ENCODE measurements at regions of chr3 and their contacts with region 1.

Region 1: GRCh38 chr3:50347194-50347918 is 1.8 kb upstream of the ZMYND10 start:
- DNase-seq: no peak
- ATAC-seq: no peak
- H3K4me3 ChIP-seq: no peak overlapping the region
- H3K27ac ChIP-seq: no peak overlapping the region
- H3K4me1 ChIP-seq: peaks cover 8% of the 10 kb centered on the region
- H3K27me3 ChIP-seq: no peaks in the 10 kb centered on the region
- CTCF ChIP-seq: peak; percentile 80

Region 2: DNA sequence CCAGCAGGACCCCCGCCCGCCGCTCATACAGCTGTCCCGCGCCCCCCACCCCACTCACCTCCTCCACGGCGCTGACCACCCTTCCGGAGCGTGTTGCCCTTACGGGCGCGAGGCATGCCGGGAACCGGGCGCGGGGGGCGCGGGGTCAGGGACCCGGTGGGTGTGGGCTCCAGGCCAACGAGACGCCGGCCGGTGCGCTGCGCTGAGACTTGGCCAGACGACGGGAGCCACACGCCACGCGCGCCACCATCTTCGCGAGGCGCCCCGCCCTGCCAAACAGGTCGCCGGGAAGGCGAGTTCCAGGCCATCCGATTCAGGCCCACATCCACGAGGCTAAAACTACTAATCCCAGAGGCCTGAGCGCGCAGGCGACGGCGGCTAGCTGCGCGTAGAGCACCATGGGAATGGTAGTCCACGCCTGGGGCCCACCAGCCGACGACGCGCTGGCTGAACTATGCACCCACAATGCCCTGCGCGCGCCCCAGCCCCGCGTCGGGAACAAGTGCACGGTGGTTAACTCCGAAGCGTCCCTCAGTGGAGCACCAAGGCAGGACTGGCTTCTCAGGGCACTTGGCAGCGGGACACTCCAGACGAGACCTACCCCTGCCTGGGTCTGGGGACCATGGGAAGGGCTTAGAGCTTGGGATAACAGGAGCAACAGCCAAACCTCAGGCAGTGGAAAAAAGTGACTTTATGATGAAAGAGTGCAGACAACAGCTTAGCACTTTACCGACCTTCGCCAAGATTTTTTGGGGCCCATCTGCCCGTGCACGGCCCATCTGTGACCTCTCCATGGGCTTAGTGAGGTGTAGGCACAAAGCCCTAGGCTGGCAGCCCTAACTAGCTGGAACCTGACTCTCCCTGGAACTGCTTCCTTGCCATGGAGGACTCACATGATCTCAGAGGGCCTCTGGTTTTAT is 54.9 kb before region 1 on chr3 and contains the start of gene IFRD2:
- CTCF ChIA-PET with region 1: interaction called, 13 read pairs
- POLR2A ChIA-PET with region 1: no interaction called
- in situ Hi-C with region 1: no loop called
- intact Hi-C with region 1: no loop called
- DNase-seq: peak; percentile 83
- ATAC-seq: peak; percentile 98
- H3K4me3 ChIP-seq: peak within 1 kb of the TSS; percentile 87 to 89
- H3K27ac ChIP-seq: peak within 1 kb of the TSS; percentile 93
- H3K4me1 ChIP-seq: peaks cover 9% of the 10 kb centered on the region
- H3K27me3 ChIP-seq: no peaks in the 10 kb centered on the region
- CTCF ChIP-seq: no peak
- total RNA-seq, gene IFRD2: 111 TPM

Region 3: DNA sequence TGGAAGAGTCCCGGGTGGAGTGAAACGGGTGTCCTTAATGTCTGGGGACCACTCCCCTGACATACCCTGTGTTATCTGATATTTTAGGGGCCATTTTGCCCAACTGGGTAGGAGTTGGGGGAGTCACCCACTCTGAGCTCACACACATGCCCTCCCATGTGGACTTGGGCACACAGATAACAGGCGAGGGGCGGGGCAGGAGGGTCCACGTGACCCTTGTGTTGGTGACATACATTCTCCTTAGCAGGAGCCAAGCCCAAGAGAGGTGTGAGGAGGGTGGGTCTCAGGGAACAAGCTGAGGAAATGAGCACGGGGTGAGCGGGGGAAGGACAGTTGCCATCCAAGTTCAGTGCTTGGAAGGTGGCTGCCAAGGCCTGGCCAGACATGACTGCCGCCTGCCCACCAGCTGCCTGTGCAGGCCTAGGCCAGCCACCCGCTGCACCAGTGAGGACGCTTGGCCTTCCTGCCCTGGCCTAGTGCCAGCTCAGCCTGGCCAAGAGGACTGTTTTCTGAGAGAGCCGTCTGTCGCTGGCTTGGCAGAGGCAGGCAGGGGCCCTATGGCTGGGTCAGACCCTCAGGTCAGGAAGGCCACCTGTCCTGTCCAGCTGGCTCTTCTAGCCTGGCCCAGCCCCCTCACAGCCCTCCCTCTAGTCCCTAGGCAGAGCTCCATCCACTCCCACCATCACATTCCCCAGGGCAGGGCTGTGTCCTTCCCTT is 43.3 kb after region 1 on chr3:
- CTCF ChIA-PET with region 1: interaction called, 10 read pairs
- POLR2A ChIA-PET with region 1: no interaction called
- in situ Hi-C with region 1: no loop called
- intact Hi-C with region 1: no loop called
- DNase-seq: no peak
- ATAC-seq: no peak
- H3K4me3 ChIP-seq: no peak overlapping the region
- H3K27ac ChIP-seq: no peak overlapping the region
- H3K4me1 ChIP-seq: no peaks in the 10 kb centered on the region
- H3K27me3 ChIP-seq: no peaks in the 10 kb centered on the region
- CTCF ChIP-seq: no peak

Region 4: DNA sequence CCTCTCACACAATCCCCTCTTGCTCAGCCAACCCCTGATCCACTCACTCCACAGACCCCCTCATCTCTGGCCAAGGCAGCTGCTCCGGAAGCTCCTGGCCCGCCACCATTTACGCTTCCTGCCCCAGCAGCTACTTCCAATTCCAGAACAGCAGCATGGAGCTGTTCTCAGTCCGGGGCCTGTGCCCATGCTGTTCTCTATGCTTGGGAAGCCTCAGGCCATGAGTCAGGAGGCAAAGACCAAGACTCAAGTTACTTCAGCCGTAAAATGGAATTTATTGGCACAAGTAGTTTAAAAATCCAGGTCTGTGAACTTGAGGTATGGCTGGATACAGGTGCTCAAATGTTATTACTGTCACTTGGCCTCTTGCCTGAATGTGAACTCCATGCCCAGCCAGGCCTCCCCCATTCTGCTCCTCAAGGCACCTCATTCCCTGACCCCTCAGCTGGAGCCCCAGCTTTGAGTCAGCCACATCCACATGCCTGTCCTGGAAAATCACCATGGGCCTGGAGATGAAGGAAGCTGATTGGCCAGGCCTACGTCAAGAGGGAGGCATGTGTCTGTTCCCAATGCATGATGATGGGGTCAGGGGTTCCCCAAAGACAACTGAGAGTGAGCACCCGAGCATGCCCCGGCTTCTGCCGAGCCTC is 187.4 kb after region 1 on chr3:
- CTCF ChIA-PET with region 1: interaction called, 10 read pairs
- POLR2A ChIA-PET with region 1: no interaction called
- in situ Hi-C with region 1: no loop called
- intact Hi-C with region 1: no loop called
- DNase-seq: no peak
- ATAC-seq: no peak
- H3K4me3 ChIP-seq: no peak overlapping the region
- H3K27ac ChIP-seq: no peak overlapping the region
- H3K4me1 ChIP-seq: no peaks in the 10 kb centered on the region
- H3K27me3 ChIP-seq: no peaks in the 10 kb centered on the region
- CTCF ChIP-seq: no peak

Measured in Panc1 (cell line).